Activated CD8-positive, alpha-beta T cell treated with anti-CD3 and anti-CD28 coated beads, Interleukin-2, amount 10 ng/mL, durations not matched to agents 7 days and 5 days (primary cell): ENCODE measurements at regions of chr3 and their contacts with region 1.

Region 1: DNA sequence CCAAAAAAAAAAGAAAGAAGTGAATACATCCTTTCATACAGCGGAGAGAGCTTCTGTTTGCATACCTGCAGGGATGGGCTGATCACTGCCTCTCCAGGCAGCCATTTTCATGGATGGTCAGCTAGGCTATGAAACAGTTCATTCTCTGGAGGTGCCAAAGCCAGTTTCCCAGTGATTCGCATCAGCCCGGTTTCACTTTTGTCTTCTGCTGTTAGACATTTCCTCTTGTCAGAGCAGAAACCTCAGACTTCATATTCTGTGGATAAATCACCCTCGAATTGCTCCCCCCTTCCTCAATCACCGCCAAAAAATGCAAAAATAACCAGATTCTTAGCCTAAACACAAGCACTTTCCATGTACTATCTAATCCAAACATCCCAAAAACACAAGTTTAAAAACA is 225.6 kb downstream of the ADAMTS9 start:
- DNase-seq: no peak
- ATAC-seq: no peak
- H3K4me3 Mint-ChIP-seq: no peak overlapping the region
- H3K27ac Mint-ChIP-seq: peak overlapping the region; percentile 25
- H3K4me1 Mint-ChIP-seq: peaks cover 7% of the 10 kb centered on the region
- H3K27me3 Mint-ChIP-seq: peaks cover 8% of the 10 kb centered on the region

Region 2: DNA sequence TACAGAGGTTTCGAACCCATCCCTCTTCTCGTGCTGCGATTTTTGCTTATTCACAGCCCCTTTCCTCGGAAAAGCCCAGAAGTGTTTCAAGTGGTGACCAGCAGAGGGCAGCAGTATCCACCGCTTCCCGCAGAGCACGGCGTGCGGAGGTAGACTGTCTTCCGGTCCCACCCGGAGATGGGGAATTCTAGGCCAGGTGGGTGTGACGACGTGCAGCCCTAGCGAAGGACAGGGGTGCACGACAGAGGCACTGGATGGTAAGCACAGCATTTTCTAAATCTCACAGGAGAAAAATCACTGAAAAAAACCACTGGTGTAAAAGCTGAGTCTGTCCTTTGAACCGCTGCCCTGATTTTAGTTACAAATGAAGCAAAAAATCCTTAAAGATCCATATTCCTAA is 431.5 kb before region 1 on chr3:
- CTCF ChIA-PET with region 1: interaction called, 10 read pairs
- POLR2A ChIA-PET with region 1: no interaction called
- DNase-seq: peak; percentile 78
- ATAC-seq: peak; percentile 97
- H3K4me3 Mint-ChIP-seq: peak overlapping the region; percentile 72
- H3K27ac Mint-ChIP-seq: peak overlapping the region; percentile 64
- H3K4me1 Mint-ChIP-seq: peaks cover 6% of the 10 kb centered on the region
- H3K27me3 Mint-ChIP-seq: peaks cover 30% of the 10 kb centered on the region

Region 3: GRCh38 chr3:64238971-64239667 is 223.1 kb before region 1 on chr3:
- CTCF ChIA-PET with region 1: no interaction called
- POLR2A ChIA-PET with region 1: no interaction called
- DNase-seq: no peak
- ATAC-seq: no peak
- H3K4me3 Mint-ChIP-seq: no peak overlapping the region
- H3K27ac Mint-ChIP-seq: no peak overlapping the region
- H3K4me1 Mint-ChIP-seq: no peaks in the 10 kb centered on the region
- H3K27me3 Mint-ChIP-seq: no peaks in the 10 kb centered on the region

Region 4: GRCh38 chr3:64484289-64484992 is 22.2 kb after region 1 on chr3:
- CTCF ChIA-PET with region 1: interaction called, 16 read pairs
- POLR2A ChIA-PET with region 1: no interaction called
- DNase-seq: peak; percentile 78
- ATAC-seq: peak; percentile 86
- H3K4me3 Mint-ChIP-seq: no peak overlapping the region
- H3K27ac Mint-ChIP-seq: no peak overlapping the region
- H3K4me1 Mint-ChIP-seq: peaks cover 5% of the 10 kb centered on the region
- H3K27me3 Mint-ChIP-seq: peaks cover 6% of the 10 kb centered on the region